ENCODE measurements at regions of chr7 and their contacts with region 1.

Region 1: GRCh38 chr7:98051118-98051744 is 55.4 kb upstream of the LMTK2 start:
- DNase-seq: no peak
- ATAC-seq: no peak
- H3K4me3 Mint-ChIP-seq: no peak overlapping the region
- H3K27ac Mint-ChIP-seq: no peak overlapping the region
- H3K4me1 Mint-ChIP-seq: peaks cover 6% of the 10 kb centered on the region
- H3K27me3 Mint-ChIP-seq: peaks cover 12% of the 10 kb centered on the region
- CTCF ChIP-seq: no peak

Region 2: DNA sequence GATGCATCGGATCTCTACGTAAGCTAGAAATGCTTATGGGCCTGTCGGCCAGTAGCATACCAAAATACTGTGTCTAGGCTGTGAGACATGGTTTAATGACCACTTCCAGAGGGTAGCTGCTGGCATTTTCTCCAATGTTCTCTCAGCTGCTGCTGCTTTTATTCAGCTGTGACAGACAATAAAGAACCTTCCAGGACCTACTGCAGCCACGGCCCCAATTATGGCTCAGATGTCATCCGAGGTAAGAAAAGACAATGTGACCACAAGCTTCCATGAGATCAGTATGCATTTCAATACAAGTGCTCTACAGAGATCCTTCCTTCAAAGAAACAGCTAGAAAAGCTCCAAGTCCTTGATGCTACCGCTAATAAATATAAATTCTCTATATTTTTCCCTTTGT is 677.5 kb before region 1 on chr7:
- CTCF ChIA-PET with region 1: no interaction called
- POLR2A ChIA-PET with region 1: interaction called, 10 read pairs
- intact Hi-C with region 1: no loop called
- DNase-seq: no peak
- ATAC-seq: no peak
- H3K4me3 Mint-ChIP-seq: no peak overlapping the region
- H3K27ac Mint-ChIP-seq: no peak overlapping the region
- H3K4me1 Mint-ChIP-seq: no peaks in the 10 kb centered on the region
- H3K27me3 Mint-ChIP-seq: no peaks in the 10 kb centered on the region
- CTCF ChIP-seq: no peak

Region 3: DNA sequence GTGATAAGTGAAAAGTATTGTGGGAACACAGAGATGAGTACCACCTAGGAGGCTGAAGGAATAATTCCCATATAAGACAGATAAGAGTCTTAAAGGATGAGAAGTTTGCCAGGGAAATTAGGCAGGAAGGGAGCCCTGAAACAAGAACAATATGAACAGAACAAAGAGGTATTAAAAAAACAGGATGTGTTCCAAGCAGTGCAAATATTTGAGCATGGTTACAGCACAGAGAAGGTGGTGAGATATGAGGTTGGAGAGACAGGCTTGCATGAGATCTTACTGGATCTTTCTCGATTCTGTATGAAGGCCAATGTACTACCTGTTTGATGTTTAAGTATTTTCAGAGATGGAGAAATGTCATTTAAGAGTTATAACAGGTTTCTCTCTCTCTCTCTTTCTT is 299.0 kb before region 1 on chr7:
- CTCF ChIA-PET with region 1: no interaction called
- POLR2A ChIA-PET with region 1: no interaction called
- intact Hi-C with region 1: no loop called
- DNase-seq: no peak
- ATAC-seq: no peak
- H3K4me3 Mint-ChIP-seq: no peak overlapping the region
- H3K27ac Mint-ChIP-seq: no peak overlapping the region
- H3K4me1 Mint-ChIP-seq: no peaks in the 10 kb centered on the region
- H3K27me3 Mint-ChIP-seq: no peaks in the 10 kb centered on the region
- CTCF ChIP-seq: no peak

Region 4: GRCh38 chr7:98448766-98449165 is 397.5 kb after region 1 on chr7:
- CTCF ChIA-PET with region 1: no interaction called
- POLR2A ChIA-PET with region 1: no interaction called
- intact Hi-C with region 1: no loop called
- DNase-seq: no peak
- ATAC-seq: no peak
- H3K4me3 Mint-ChIP-seq: no peak overlapping the region
- H3K27ac Mint-ChIP-seq: no peak overlapping the region
- H3K4me1 Mint-ChIP-seq: no peaks in the 10 kb centered on the region
- H3K27me3 Mint-ChIP-seq: peaks cover 7% of the 10 kb centered on the region
- CTCF ChIP-seq: no peak

Measured in activated B cell treated with CpG ODN at 0.5 μM for 24 hours (primary cell).